Activated B cell treated with CpG ODN at 0.5 μM for 24 hours (primary cell): ENCODE measurements at regions of chr1 and their contacts with region 1.

Region 1: GRCh38 chr1:149927503-149928387 is at the start of gene SF3B4:
- DNase-seq: peak; percentile 94
- ATAC-seq: peak; percentile 96
- H3K4me3 Mint-ChIP-seq: peak within 1 kb of the TSS; percentile 98
- H3K27ac Mint-ChIP-seq: peak within 1 kb of the TSS; percentile 95
- H3K4me1 Mint-ChIP-seq: peaks cover 36% of the 10 kb centered on the region
- H3K27me3 Mint-ChIP-seq: peaks cover 12% of the 10 kb centered on the region
- CTCF ChIP-seq: no peak
- total RNA-seq, gene SF3B4: 80.8 and 86.2 TPM in 2 replicates

Region 2: GRCh38 chr1:149899460-149900293 is 28.1 kb before region 1 on chr1 and contains the start of gene BOLA1:
- CTCF ChIA-PET with region 1: no interaction called
- POLR2A ChIA-PET with region 1: interaction called, 13 read pairs
- intact Hi-C with region 1: loop called (anchors 1 kb)
- DNase-seq: peak; percentile 69
- ATAC-seq: peak; percentile 99
- H3K4me3 Mint-ChIP-seq: peak within 1 kb of the TSS; percentile 92
- H3K27ac Mint-ChIP-seq: peak within 1 kb of the TSS; percentile 86
- H3K4me1 Mint-ChIP-seq: peaks cover 20% of the 10 kb centered on the region
- H3K27me3 Mint-ChIP-seq: no peaks in the 10 kb centered on the region
- CTCF ChIP-seq: no peak
- total RNA-seq, gene BOLA1: 10.2 and 11.6 TPM in 2 replicates

Region 3: GRCh38 chr1:150053926-150054325 is 126.2 kb after region 1 on chr1:
- CTCF ChIA-PET with region 1: interaction called, 4 read pairs
- POLR2A ChIA-PET with region 1: interaction called, 10 read pairs
- intact Hi-C with region 1: no loop called
- DNase-seq: no peak
- ATAC-seq: no peak
- H3K4me3 Mint-ChIP-seq: no peak overlapping the region
- H3K27ac Mint-ChIP-seq: no peak overlapping the region
- H3K4me1 Mint-ChIP-seq: peaks cover 16% of the 10 kb centered on the region
- H3K27me3 Mint-ChIP-seq: no peaks in the 10 kb centered on the region
- CTCF ChIP-seq: no peak